ENCODE measurements at regions of chr3 and their contacts with region 1.

Region 1: GRCh38 chr3:114152519-114153151 is 26.2 kb downstream of the DRD3 start:
- DNase-seq: peak; percentile 68
- ATAC-seq: peak; percentile 88
- H3K4me3 ChIP-seq: peak overlapping the region; percentile 41 to 57
- H3K27ac ChIP-seq: peak overlapping the region; percentile 41; the same call in 1 of the 2 replicates
- H3K4me1 ChIP-seq: peaks cover 0 to 11% of the 10 kb centered on the region in 2 experiments; a peak in 2 of 4 replicates
- H3K27me3 ChIP-seq: no peaks in the 10 kb centered on the region
- CTCF ChIP-seq: peak; percentile 88 to 97 (median 93)
- POLR2A ChIP-seq: no peak
- RAD21 ChIP-seq: peak; percentile 92

Region 2: DNA sequence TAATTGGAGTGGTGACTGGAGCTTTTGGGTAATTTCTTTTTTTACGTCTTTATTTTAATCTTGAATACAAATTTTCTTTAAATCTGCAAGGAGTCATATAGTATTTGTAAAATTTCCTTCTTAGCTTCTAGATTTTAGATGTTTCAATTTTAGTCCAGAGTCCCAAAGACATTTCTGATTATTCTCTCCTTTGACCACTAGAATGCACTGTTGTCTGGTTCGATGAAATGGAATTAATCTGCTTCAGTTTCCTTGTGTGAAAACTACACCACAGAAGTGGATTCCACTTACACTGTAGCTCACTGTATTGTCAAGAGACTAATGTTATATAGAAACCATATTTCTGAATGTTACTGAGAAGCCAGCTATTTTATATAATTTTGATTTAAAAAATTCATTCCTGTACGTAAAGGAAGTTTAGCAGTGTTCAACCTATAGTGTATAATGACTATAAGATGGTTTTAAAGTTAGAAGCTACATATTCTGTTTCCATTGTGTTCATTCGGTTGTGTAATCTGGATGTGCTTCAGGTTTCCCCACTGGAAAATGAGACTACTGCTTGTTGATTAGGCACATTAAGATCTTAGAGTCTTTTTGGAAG is 307.9 kb before region 1 on chr3:
- CTCF ChIA-PET with region 1: interaction called, 6 read pairs
- POLR2A ChIA-PET with region 1: no interaction called
- RAD21 ChIA-PET with region 1: no interaction called
- intact Hi-C with region 1: loop called (anchors 10 kb)
- DNase-seq: no peak
- ATAC-seq: peak; percentile 72
- H3K4me3 ChIP-seq: no peak overlapping the region
- H3K27ac ChIP-seq: no peak overlapping the region
- H3K4me1 ChIP-seq: peaks cover 0 to 7% of the 10 kb centered on the region in 2 experiments; a peak in 1 of 4 replicates
- H3K27me3 ChIP-seq: no peaks in the 10 kb centered on the region
- CTCF ChIP-seq: peak; percentile 58 to 70 (median 60); a peak in 5 of 6 replicates
- POLR2A ChIP-seq: no peak
- RAD21 ChIP-seq: peak; percentile 68

Region 3: DNA sequence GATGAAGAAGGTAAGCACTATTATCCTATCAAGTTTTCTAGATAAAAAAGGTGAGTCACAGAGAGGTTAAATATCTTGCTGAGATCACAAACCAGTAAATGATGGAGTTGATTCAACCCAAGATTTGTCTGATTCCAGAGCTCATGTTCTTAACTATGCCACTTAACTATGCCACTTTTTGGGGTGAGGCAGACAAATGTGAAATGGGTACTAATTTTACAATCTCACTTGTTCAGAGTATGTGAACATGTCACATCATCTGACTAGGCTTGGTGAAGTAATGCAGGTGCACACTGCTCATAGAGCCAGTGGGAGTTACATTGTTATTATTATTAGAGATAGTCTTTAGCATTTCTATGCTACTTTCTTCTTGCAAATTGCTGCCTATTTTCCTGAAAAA is 24.3 kb after region 1 on chr3:
- CTCF ChIA-PET with region 1: interaction called, 12 read pairs
- POLR2A ChIA-PET with region 1: no interaction called
- RAD21 ChIA-PET with region 1: no interaction called
- intact Hi-C with region 1: no loop called
- DNase-seq: no peak
- ATAC-seq: no peak
- H3K4me3 ChIP-seq: no peak overlapping the region
- H3K27ac ChIP-seq: no peak overlapping the region
- H3K4me1 ChIP-seq: no peaks in the 10 kb centered on the region
- H3K27me3 ChIP-seq: peaks cover 55% of the 10 kb centered on the region
- CTCF ChIP-seq: no peak
- POLR2A ChIP-seq: no peak
- RAD21 ChIP-seq: no peak

Region 4: DNA sequence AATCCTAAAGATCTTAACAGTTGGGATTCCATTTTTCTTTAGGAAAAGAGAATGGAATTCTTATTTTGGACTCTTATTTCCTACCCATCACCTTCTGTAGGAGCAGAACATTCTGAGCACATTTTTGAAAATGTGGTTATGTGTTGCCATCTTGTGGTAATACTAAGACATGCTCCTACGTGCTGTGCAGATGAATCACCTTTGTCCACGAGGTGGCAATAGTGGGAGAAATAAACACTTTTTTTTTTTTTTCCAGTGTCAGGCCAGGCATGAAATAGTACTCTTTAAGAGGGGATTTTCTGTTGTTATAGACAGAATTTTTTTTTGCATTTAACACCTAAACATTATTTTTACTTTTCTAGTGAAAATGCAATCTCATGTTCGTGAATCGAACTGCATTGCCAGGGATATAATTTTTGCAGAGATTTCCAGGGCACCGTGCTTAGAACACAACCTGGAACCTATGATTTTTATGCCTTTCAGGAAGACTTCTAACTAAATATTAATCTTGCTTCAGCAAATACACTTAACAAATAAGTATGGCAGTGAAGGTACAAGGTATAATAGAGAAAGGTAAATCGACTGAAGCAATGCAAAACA is 1667.2 kb after region 1 on chr3:
- CTCF ChIA-PET with region 1: no interaction called
- POLR2A ChIA-PET with region 1: no interaction called
- RAD21 ChIA-PET with region 1: no interaction called
- intact Hi-C with region 1: loop called (anchors 10 kb)
- DNase-seq: peak; percentile 68
- ATAC-seq: peak; percentile 86
- H3K4me3 ChIP-seq: no peak overlapping the region
- H3K27ac ChIP-seq: no peak overlapping the region
- H3K4me1 ChIP-seq: no peaks in the 10 kb centered on the region
- H3K27me3 ChIP-seq: no peaks in the 10 kb centered on the region
- CTCF ChIP-seq: peak; percentile 95 to 100 (median 100)
- POLR2A ChIP-seq: no peak
- RAD21 ChIP-seq: peak; percentile 92

Measured in HCT116 (cell line).